Head of caudate nucleus (tissue), 42 donors: ENCODE measurements at regions of chr9 and their contacts with region 1.

Region 1: DNA sequence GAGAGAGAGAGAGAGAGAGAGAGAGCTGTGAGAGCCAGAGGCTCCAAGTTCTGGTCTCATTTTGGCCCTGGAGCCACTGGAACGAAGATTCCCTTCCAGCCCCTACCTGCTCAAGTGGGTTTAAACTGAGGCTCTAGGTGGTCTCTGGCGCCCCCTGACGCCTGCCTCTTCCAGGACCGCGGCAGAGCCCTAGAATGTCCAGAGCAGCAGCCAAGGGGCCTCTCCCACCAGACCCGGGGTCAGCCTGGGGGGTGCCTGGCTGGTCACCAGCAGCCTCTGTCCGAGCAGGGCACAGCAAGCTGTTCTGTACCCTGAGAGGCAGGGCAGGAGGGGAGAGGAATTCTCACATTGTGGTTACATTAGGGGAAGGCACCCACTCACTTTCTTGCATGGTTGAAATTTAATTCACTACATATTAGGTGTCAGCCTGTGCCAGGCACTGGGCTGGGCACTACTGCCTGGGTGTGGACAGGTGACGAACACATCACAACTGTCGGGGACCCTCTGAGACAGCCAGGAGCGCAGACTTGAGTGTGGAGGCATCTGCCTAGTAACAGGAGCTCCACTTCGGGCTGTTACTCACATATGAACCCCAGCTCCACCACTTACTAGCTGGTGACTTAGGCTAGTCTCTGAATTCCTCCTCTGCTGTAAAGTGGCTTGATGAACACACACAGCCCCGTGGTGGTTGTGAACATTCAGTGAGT is 44.5 kb downstream of the AMBP start:
- DNase-seq: peak in 34 of 42 donors; percentile 29 to 79 (median 54)

Region 2: GRCh38 chr9:112921549-112921948 is 1112.0 kb before region 1 on chr9:
- intact Hi-C with region 1: no loop called
- DNase-seq: peak in 17 of 42 donors; percentile 7 to 57 (median 23)

Region 3: GRCh38 chr9:113807173-113808061 is 226.1 kb before region 1 on chr9:
- intact Hi-C with region 1: loop called (anchors 5 kb)
- DNase-seq: peak in 39 of 42 donors; percentile 25 to 84 (median 61)

Region 4: DNA sequence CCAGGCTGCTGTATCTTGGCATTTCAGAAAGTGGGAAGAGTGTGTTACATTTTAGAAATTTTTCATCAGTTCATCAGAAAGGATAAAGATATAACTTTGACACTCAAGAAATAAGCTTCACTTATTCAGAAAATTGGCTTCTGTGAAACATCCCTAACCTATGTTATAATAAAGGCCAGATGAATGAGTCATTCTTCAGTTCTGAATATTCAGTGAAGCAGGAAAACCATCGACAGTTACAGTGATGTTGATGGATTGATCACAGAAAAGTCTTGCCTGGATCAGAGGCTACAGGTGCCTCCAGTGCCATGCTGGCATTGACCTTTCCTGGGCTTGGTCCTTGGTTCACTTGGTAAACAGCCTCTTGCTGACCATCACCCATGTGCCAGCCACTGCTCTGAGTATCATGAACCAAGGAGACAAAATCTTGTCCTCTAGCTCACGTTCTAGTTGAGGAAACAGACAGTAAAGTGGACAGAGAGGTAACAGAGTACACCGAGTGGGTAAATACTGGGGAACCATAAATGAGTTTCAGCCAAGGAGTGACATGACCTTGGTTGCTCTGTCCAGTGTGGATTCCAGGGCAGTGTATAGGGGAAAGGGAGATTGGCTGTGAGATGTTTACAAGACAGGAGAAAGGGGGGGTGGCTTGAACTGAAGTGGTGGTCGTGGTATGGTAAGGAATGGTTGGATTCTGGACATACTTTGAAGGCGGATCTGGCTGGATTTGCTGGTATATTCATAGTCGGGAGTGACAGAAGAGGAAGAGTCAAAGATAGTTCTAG is 54.0 kb before region 1 on chr9:
- intact Hi-C with region 1: no loop called
- DNase-seq: no peak